PC-9 (cell line): ENCODE measurements at regions of chr5 and their contacts with region 1.

Region 1: DNA sequence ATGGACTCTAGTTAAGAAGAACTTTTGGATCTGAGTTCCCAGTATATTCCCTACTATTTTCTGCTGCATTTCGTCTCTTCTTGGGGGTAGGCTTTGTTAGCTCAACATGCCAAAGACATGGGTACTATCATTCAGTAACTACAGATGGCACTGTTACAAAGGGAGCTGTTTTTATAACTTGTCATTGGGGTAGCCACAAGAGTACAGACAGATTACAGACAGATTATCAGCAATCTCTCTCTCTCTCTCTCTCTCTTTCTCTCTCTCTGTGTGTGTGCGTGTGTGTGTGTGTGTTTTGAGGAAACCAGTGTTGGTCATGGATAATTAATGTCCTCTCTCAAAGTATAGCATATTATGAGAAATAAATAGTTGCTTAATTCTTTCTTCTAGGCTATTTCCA is 116.1 kb downstream of the WDR70 start:
- DNase-seq: no peak
- H3K4me3 ChIP-seq: no peak overlapping the region
- H3K27ac ChIP-seq: no peak overlapping the region
- H3K4me1 ChIP-seq: peaks cover 15% of the 10 kb centered on the region
- H3K27me3 ChIP-seq: no peaks in the 10 kb centered on the region
- CTCF ChIP-seq: peak; percentile 29; the same call in 1 of the 2 replicates

Region 2: DNA sequence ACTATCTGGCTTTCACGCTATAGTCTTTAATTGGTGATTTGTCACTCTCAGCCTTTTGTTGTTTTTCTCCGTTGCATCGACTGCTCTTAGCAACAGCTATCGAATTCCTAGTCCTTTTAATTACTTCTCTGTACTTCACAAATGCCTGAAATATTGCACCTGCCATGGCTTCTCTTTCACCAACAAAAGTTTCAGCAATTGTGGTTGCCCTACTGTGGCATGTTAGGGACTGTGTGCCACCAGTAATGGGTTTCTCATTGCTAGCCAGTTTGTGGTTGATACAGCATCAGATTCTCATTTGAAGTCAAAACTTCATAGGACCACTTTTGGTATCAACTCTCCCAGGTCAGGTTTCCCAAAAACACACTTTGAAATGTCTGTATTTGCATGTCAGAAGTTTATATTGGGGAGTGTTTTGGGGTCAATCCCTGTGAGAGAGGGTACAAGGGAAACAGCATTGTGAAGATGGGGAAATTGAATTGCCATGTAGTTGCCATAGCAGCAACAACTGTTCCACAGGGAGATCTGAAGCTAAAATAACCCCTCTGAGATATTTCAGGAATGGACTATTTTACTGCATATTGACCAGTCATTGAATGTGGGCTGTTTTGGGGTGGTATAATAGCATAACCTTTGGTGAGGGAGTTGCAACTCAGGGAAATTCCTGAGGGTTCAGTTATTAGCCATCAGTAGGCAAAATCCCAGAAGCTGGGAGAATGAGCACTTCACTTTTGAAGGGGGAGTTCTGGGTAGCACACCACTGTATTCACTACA is 16.9 kb before region 1 on chr5:
- CTCF ChIA-PET with region 1: no interaction called
- POLR2A ChIA-PET with region 1: interaction called, 10 read pairs
- intact Hi-C with region 1: no loop called
- DNase-seq: no peak
- H3K4me3 ChIP-seq: no peak overlapping the region
- H3K27ac ChIP-seq: no peak overlapping the region
- H3K4me1 ChIP-seq: no peaks in the 10 kb centered on the region
- H3K27me3 ChIP-seq: no peaks in the 10 kb centered on the region
- CTCF ChIP-seq: no peak

Region 3: DNA sequence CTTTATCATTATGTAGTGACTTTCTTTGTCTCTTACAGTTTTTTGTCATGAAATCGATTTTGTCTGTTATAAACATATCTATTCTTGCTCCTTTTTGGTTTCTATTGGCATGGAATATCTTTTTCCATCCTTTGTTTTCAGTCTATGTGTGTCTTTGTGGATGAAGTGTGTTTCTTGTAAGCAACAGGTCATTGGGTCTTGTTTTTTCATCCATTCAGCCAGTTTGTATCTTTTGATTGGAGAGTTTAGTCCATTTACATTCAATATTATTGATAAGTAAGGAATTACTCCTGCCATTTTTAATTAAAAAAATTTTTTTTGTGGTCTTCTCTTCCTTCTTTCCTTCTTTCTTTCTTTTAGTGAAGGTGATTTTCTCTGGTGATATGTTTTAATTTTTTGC is 150.5 kb after region 1 on chr5:
- CTCF ChIA-PET with region 1: no interaction called
- POLR2A ChIA-PET with region 1: no interaction called
- intact Hi-C with region 1: no loop called
- DNase-seq: no peak
- H3K4me3 ChIP-seq: no peak overlapping the region
- H3K27ac ChIP-seq: no peak overlapping the region
- H3K4me1 ChIP-seq: no peaks in the 10 kb centered on the region
- H3K27me3 ChIP-seq: no peaks in the 10 kb centered on the region
- CTCF ChIP-seq: no peak